K562 (cell line): ENCODE measurements at regions of chr3 and their contacts with region 1.

Region 1: DNA sequence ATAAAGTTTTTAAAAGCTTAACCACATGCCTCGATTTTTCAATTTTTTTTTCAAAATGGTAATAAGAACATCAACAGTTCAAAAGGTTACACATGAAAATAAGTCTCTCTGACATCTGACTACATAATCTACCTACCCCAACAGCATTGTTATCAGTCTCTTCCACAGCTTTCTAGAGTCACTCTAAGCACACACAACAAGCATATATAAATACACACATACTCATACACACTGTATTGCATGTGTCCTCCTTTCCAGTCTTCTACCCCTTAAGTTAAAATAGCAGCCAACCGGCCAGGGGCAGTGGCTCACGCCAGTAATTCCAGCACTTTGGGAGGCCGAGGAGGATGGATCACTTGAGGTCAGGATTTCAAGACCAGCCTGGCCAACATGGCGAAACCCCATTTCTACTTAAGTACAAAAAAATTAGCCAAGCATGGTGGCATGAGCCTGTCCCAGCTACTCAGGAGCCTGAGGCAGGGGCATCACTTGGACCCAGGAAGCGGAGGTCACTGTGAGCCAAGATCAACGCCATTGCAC is 12.2 kb downstream of the TBL1XR1 start:
- DNase-seq: no peak
- ATAC-seq: peak; percentile 56
- H3K4me3 ChIP-seq: no peak overlapping the region
- H3K27ac ChIP-seq: peak overlapping the region; percentile 41; the same call in 1 of the 3 replicates
- H3K4me1 ChIP-seq: peaks cover 16 to 28% of the 10 kb centered on the region in 2 experiments; a peak in 4 of 5 replicates
- H3K27me3 ChIP-seq: no peaks in the 10 kb centered on the region
- CTCF ChIP-seq: no peak
- EP300 ChIP-seq: no peak
- POLR2A ChIP-seq: no peak
- RAD21 ChIP-seq: no peak

Region 2: GRCh38 chr3:176840641-176841286 is 344.3 kb before region 1 on chr3:
- CTCF ChIA-PET with region 1: no interaction called
- POLR2A ChIA-PET with region 1: no interaction called
- in situ Hi-C with region 1: no loop called
- intact Hi-C with region 1: no loop called
- DNase-seq: no peak
- ATAC-seq: no peak
- H3K4me3 ChIP-seq: no peak overlapping the region
- H3K27ac ChIP-seq: no peak overlapping the region
- H3K4me1 ChIP-seq: no peaks in the 10 kb centered on the region
- H3K27me3 ChIP-seq: no peaks in the 10 kb centered on the region
- CTCF ChIP-seq: no peak
- EP300 ChIP-seq: no peak
- POLR2A ChIP-seq: no peak
- RAD21 ChIP-seq: no peak

Region 3: DNA sequence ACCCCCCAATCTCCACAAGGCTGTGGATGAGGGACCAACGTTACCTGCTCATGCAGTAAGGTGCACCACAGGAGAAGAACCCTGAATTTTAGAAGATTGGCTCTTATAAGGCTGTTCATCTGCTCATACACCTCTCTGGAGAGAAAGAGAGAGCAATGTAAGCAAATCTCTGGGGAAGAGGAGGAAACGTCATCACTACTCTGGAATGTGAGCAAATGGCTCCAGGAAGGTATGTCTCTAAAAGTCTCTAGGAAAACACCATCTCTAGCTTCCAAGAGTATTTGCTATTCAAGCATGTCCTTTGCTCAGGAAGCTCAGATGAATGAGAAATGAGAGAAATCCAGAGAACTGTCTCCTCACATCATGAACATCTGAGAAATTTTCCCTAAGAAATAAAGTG is 223.2 kb before region 1 on chr3:
- CTCF ChIA-PET with region 1: no interaction called
- POLR2A ChIA-PET with region 1: no interaction called
- in situ Hi-C with region 1: no loop called
- intact Hi-C with region 1: loop called (anchors 10 kb)
- DNase-seq: no peak
- ATAC-seq: no peak
- H3K4me3 ChIP-seq: no peak overlapping the region
- H3K27ac ChIP-seq: no peak overlapping the region
- H3K4me1 ChIP-seq: peaks cover 0 to 4% of the 10 kb centered on the region in 2 experiments; a peak in 2 of 5 replicates
- H3K27me3 ChIP-seq: no peaks in the 10 kb centered on the region
- CTCF ChIP-seq: no peak
- EP300 ChIP-seq: no peak
- POLR2A ChIP-seq: no peak
- RAD21 ChIP-seq: no peak

Region 4: DNA sequence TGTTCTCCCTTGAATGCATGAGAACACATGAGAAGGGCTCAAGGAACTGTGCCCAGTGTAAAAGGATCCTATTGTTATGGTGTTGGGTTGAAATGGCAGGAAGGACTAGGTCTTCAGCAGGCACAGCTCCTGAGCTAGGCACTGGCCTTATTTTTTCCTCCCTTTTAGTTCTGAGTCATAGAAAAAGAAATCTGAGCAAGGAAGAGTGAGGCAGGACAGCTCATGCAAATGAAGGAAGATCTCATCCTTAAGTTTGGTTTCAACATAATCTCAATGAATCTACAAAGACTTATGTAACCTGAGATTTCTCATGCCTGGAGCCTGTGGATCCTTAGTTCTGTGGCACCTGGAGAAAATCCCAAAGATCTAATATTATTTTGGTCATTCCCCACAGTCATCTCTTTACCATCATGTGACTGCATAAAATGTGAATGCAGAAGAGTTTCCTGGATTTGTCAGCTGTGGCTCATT is 200.8 kb after region 1 on chr3:
- CTCF ChIA-PET with region 1: no interaction called
- POLR2A ChIA-PET with region 1: no interaction called
- in situ Hi-C with region 1: no loop called
- intact Hi-C with region 1: no loop called
- DNase-seq: no peak
- ATAC-seq: no peak
- H3K4me3 ChIP-seq: no peak overlapping the region
- H3K27ac ChIP-seq: no peak overlapping the region
- H3K4me1 ChIP-seq: no peaks in the 10 kb centered on the region
- H3K27me3 ChIP-seq: no peaks in the 10 kb centered on the region
- CTCF ChIP-seq: no peak
- EP300 ChIP-seq: no peak
- POLR2A ChIP-seq: no peak
- RAD21 ChIP-seq: no peak